ENCODE measurements at regions of chr17 and their contacts with region 1.

Region 1: GRCh38 chr17:49230636-49231562 is at the start of gene PHOSPHO1:
- DNase-seq: peak; percentile 96
- H3K4me3 Mint-ChIP-seq: peak within 1 kb of the TSS; percentile 84
- H3K27ac Mint-ChIP-seq: no peak within 1 kb of the TSS
- H3K4me1 Mint-ChIP-seq: peaks cover 8% of the 10 kb centered on the region
- H3K27me3 Mint-ChIP-seq: peaks cover 29% of the 10 kb centered on the region
- total RNA-seq, gene PHOSPHO1: 0.09 TPM in 1 of 2 replicates, not detected in the other

Region 2: DNA sequence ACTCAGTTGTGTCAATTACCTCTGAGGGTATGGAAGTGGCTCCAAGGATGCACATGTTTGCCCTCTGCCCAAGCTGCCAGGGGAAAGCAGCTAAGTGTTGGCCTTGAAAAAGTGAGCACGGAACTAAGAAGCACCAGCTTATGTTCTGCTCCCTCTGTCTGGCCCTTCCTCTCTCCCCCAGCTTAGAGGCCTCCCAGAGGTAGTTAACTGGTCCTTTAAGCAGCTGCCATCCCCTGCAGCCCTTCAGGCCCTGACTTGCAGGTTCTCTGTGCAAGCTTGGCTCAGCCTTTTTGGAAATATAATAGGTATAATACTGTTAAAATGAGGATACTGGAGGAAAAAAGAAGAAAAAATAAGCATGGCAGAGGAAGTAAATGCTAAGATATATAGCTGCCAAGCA is 329.7 kb before region 1 on chr17:
- intact Hi-C with region 1: no loop called
- DNase-seq: no peak
- H3K4me3 Mint-ChIP-seq: no peak overlapping the region
- H3K27ac Mint-ChIP-seq: no peak overlapping the region
- H3K4me1 Mint-ChIP-seq: peaks cover 2% of the 10 kb centered on the region
- H3K27me3 Mint-ChIP-seq: no peaks in the 10 kb centered on the region

Region 3: GRCh38 chr17:49180303-49180702 is 50.6 kb before region 1 on chr17:
- intact Hi-C with region 1: loop called (anchors 1 kb)
- DNase-seq: peak; percentile 88
- H3K4me3 Mint-ChIP-seq: no peak overlapping the region
- H3K27ac Mint-ChIP-seq: no peak overlapping the region
- H3K4me1 Mint-ChIP-seq: peaks cover 3% of the 10 kb centered on the region
- H3K27me3 Mint-ChIP-seq: peaks cover 1% of the 10 kb centered on the region

Region 4: GRCh38 chr17:49210158-49211029 is 20.5 kb before region 1 on chr17 and contains the starts of genes ABI3 and GNGT2:
- intact Hi-C with region 1: loop called (anchors 2 kb)
- DNase-seq: peak; percentile 91
- H3K4me3 Mint-ChIP-seq: peak within 1 kb of the TSS; percentile 95
- H3K27ac Mint-ChIP-seq: peak within 1 kb of the TSS; percentile 86
- H3K4me1 Mint-ChIP-seq: peaks cover 56% of the 10 kb centered on the region
- H3K27me3 Mint-ChIP-seq: no peaks in the 10 kb centered on the region
- total RNA-seq, gene ABI3: 27.8 and 28.4 TPM in 2 replicates
- total RNA-seq, gene GNGT2: 18.2 and 19.5 TPM in 2 replicates

Region 5: GRCh38 chr17:49217651-49218413 is 13.1 kb before region 1 on chr17:
- intact Hi-C with region 1: loop called (anchors 1 kb)
- DNase-seq: peak; percentile 91
- H3K4me3 Mint-ChIP-seq: peak overlapping the region; percentile 80
- H3K27ac Mint-ChIP-seq: peak overlapping the region; percentile 87
- H3K4me1 Mint-ChIP-seq: peaks cover 55% of the 10 kb centered on the region
- H3K27me3 Mint-ChIP-seq: no peaks in the 10 kb centered on the region

Region 6: DNA sequence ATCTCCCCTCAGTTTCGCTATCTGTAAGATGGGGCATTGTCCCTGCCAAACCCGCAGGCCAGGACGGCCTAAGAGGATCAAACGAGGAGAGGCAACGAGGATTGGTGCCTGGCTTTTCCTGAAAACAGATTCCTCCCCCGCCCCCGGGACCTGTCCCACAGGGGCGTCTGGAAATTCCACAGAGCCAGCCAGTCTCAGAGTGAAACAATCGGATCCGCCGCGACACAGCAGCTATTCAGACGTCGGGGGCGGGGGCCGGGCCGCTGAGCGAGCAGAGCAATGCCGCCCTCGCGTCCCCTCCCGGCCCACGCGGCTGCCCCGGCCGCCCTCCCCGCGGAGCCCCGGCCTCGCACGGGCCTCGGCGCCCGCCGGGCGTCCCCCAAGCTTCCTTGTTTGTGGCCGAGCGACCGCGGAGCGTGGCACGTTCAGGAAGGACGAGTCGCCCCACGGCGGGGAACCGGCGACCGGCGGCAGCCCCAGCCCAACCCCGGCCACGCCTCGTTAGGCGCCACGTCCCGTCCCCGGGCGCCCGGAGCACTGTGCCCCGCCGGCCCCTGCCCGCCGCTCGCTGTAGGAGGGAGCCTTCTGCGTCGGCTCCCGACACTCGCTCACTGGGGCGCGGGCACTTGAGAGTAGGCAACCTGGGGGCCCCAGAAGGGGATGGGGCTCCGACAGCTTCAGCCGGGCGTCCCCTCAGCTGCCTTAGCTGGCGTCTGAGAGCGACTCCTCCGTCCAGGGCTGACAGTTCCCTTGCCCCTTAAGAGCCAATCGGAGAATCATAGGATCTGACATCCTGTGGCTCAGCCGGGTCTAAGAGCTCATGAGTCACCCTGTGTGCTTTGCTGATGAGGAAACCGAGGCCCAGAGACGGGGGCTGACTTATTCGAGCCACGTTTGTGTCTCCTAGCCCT is 29.4 kb after region 1 on chr17:
- intact Hi-C with region 1: loop called (anchors 2 kb)
- DNase-seq: peak; percentile 81
- H3K4me3 Mint-ChIP-seq: peak overlapping the region; percentile 84
- H3K27ac Mint-ChIP-seq: peak overlapping the region; percentile 81
- H3K4me1 Mint-ChIP-seq: peaks cover 13% of the 10 kb centered on the region
- H3K27me3 Mint-ChIP-seq: peaks cover 18% of the 10 kb centered on the region